ENCODE measurements at regions of chr21 and their contacts with region 1.

Region 1: DNA sequence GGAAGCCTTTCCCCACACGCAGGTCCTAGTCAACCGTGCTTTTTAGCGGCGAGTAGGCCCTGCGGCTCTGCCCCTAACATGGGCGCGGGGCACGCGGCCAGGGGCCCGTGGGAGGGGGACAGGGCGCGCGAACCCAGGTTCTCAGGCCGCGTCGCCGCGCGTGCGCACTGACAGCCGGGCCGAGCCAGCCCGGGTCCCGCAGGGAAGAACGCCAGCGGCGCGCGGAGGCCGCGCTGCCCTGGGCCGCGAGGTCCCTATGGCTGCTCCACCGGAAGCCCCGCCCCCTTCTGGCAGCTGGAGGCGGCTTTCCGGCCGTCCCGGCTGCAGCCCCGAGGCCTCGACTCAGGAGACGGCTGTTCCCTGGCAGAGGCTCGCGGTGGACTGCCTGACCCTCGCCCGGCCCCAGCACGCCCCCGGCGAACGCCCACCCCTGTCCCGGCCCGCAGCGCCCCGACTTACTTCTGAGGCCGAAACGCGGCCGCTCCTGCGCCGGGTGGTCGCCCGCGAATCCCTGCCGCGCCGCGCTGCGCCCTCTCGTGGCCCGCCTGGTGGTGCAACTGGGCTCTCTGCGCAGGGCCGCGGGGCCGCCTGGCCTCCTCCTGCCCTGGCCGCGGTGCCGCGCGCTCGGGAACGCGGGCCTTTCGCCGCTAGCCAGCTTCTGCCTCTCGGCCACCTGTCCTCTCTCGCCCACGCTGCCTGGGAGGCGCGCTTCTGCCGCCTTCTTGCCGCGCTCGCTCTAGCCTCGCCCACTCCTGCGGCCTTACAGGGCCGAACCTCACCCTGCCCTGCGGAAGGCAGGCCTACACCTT is 16.6 kb upstream of the RIPPLY3 start:
- DNase-seq: peak; percentile 96 to 98 (median 96)
- ATAC-seq: peak; percentile 96 to 99 (median 97)
- H3K4me3 ChIP-seq: peak overlapping the region; percentile 39 to 77 (median 69)
- H3K27ac ChIP-seq: peak overlapping the region; percentile 69 to 98 (median 94)
- H3K4me1 ChIP-seq: peaks cover 0 to 10% (median 0%) of the 10 kb centered on the region in 12 donors
- H3K27me3 ChIP-seq: peaks cover 0 to 16% (median 3%) of the 10 kb centered on the region in 9 donors
- CTCF ChIP-seq: peak; percentile 65 to 99 (median 94)
- POLR2A ChIP-seq: peak in 1 of 2 donors; percentile 65

Region 2: DNA sequence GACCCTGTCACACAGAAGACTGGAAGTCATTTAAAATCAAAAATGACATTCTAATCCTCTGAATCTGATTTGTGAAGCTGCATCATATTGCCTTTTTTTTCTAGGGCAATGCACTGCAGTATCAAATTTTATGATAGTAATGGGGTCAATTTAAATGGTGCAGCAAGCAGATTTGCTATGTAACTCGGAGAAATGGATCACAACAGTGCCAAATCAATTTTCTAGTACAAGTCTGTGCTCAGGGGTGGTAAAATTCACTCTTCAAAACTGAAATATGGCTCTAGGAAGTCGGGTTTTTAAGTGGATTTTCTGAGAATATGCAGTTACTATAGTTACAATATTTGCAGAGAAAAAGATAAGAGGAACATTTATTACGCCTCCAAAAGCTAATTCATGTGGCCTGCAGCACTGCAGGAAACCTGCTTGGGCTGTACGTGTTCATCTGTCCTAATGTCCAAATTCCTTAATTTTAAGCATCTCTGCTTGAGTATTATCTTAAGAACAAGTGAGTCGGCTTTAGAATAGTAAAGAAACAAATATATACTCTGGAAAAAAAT is 55.0 kb before region 1 on chr21:
- intact Hi-C with region 1: loop called in 2 of 10 experiments (anchors 1 to 5 kb)
- DNase-seq: no peak
- ATAC-seq: no peak
- H3K4me3 ChIP-seq: no peak overlapping the region
- H3K27ac ChIP-seq: no peak overlapping the region
- H3K4me1 ChIP-seq: peaks cover 0 to 18% (median 0%) of the 10 kb centered on the region in 12 donors
- H3K27me3 ChIP-seq: no peaks in the 10 kb centered on the region
- CTCF ChIP-seq: no peak
- POLR2A ChIP-seq: no peak

Region 3: DNA sequence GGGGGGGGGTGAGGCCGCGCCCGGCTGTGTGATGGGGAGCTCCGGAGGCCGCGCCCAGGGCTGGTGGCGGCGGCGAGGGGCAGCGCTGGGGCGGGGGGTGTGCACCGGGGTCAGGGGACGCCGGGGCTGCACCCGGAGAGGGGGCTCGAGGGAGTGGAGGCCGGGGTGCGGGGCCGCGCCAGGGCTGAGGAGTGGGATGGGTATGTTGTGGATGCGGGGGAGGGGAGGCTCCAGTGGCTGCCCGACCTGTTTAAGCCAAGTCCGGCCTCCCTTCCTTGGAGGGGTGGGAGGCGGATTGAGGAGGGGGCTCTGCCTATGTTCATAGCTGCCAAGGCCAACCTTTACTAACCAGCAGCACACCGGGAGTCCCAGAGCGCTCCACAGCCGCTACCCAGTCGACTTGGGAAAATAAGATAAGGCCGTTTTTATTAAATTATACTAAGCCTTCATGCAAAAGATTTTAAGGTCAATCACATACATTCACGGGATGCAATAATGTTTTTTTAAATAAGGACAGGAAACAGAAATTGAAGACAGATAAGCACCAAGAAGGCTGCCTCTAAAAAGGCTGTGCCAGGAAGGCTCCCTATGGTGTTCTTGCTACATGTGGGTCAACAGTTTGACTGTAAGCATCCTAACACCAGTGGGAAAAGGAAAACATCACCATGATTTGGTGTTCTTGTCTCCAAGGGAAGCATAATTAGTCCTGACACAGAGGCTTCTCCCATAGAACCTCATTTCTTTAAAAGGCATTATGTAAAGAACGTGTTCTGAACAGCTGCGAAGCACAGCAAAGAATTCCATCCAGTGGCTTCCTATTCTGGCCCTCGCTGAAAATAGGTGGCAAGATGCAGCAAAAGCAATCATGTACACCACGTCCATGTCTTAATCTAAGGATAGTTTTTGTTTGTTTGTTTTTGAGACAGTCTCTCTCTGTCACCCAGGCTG is 22.8 kb before region 1 on chr21:
- intact Hi-C with region 1: loop called in 1 of 10 experiments (anchors 1 kb)
- DNase-seq: peak in 1 of 5 donors; percentile 43
- ATAC-seq: no peak
- H3K4me3 ChIP-seq: peak overlapping the region; percentile 29 to 95 (median 76)
- H3K27ac ChIP-seq: peak overlapping the region in 11 of 12 donors; percentile 26 to 87 (median 72)
- H3K4me1 ChIP-seq: peaks cover 0 to 17% (median 8%) of the 10 kb centered on the region in 12 donors
- H3K27me3 ChIP-seq: no peaks in the 10 kb centered on the region
- CTCF ChIP-seq: no peak
- POLR2A ChIP-seq: no peak

Region 4: GRCh38 chr21:37072988-37073416 is 83.1 kb after region 1 on chr21 and contains the starts of genes PIGP and TTC3:
- intact Hi-C with region 1: loop called in 6 of 10 experiments (anchors 1 to 10 kb)
- DNase-seq: peak; percentile 95 to 99 (median 96)
- ATAC-seq: peak; percentile 84 to 92 (median 88)
- H3K4me3 ChIP-seq: peak within 1 kb of the TSS; percentile 67 to 96 (median 80)
- H3K27ac ChIP-seq: peak within 1 kb of the TSS; percentile 92 to 100 (median 99)
- H3K4me1 ChIP-seq: peaks cover 0 to 31% (median 18%) of the 10 kb centered on the region in 12 donors
- H3K27me3 ChIP-seq: no peaks in the 10 kb centered on the region
- CTCF ChIP-seq: no peak
- POLR2A ChIP-seq: peak; percentile 42 to 94
- total RNA-seq, gene PIGP: 30.7 to 44.9 (median 37.9) TPM
- total RNA-seq, gene TTC3: 34.5 to 72.1 (median 46.8) TPM

Region 5: DNA sequence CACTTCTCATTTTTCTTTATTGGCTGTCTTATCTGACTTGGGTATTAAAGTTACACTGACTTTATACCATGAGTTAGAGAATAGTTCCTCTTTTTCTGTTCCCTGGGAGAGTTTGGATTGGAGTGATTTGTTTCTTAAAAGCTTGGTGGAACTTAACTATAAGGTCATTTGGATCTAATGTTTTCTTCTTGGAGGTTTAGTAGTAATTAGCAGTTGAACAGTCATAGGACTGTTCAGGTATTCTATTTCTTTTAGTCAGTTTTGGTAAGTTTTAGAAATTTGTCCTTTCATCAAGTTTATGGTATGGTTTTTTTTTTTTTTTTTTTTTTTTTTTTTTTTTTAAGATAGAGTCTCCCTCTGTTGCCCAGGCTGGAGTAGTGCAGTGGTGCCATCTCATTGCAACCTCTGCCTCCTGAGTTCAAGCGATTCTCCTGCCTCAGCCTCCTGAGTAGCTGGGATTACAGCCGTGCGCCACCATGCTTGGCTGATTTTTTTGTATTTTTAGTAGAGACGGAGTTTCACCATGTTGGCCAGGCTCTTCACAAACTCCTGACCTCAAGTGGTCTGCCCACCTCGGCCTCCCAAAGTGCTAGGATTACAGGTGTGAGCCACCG is 89.4 kb after region 1 on chr21:
- intact Hi-C with region 1: loop called in 5 of 10 experiments (anchors 5 to 10 kb)
- DNase-seq: no peak
- ATAC-seq: no peak
- H3K4me3 ChIP-seq: no peak overlapping the region
- H3K27ac ChIP-seq: no peak overlapping the region
- H3K4me1 ChIP-seq: peaks cover 0 to 36% (median 18%) of the 10 kb centered on the region in 12 donors
- H3K27me3 ChIP-seq: no peaks in the 10 kb centered on the region
- CTCF ChIP-seq: peak in 3 of 12 donors; percentile 11 to 33 (median 15)
- POLR2A ChIP-seq: no peak